Activated CD8-positive, alpha-beta memory T cell treated with anti-CD3 and anti-CD28 coated beads, Interleukin-2, amount 10 ng/mL, durations not matched to agents 7 days and 5 days (primary cell): ENCODE measurements at regions of chr10 and their contacts with region 1.

Region 1: DNA sequence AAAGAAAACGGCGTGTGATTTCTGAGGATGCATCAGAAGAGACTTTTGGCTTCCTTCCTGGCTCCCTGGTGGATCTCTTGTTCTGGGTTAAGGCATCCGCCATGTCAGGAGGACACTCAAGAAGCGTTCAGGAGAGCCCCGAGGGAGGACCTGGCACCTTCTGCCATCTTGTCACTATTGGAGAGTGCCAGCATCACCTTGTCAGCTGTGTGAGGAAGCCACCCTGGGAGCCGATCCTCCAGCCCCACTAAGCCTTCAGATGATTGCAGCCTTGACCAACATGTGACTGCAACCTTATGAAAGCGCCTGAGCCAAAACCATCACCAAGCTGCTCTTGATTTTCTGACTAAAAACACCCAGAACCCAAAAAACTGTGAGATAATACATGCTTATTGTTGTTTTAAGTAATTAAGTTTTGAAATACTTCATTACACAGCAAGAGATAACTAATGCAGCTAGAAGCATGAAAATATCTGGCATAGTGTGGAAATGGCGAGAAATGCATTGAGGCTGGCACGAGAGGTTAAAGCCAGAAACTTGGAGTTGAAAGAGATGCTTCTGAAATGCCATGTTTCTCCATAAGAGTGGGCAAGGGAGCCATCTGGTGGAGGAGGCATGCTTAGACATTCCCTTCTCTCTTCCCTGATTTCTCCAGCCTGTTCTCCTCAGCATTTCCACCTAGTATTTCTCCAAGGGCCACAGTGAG is 5.4 kb upstream of the ZFYVE27 start:
- DNase-seq: peak; percentile 63
- ATAC-seq: peak; percentile 63
- H3K4me3 Mint-ChIP-seq: no peak overlapping the region
- H3K27ac Mint-ChIP-seq: no peak overlapping the region
- H3K4me1 Mint-ChIP-seq: peaks cover 10% of the 10 kb centered on the region
- H3K27me3 Mint-ChIP-seq: peaks cover 5% of the 10 kb centered on the region

Region 2: GRCh38 chr10:97632949-97633884 is 98.3 kb before region 1 on chr10 and contains the start of gene MORN4:
- CTCF ChIA-PET with region 1: no interaction called
- DNase-seq: peak; percentile 93
- ATAC-seq: peak; percentile 99
- H3K4me3 Mint-ChIP-seq: peak within 1 kb of the TSS; percentile 93
- H3K27ac Mint-ChIP-seq: peak within 1 kb of the TSS; percentile 84
- H3K4me1 Mint-ChIP-seq: peaks cover 12% of the 10 kb centered on the region
- H3K27me3 Mint-ChIP-seq: peaks cover 3% of the 10 kb centered on the region
- total RNA-seq, gene MORN4: 1.9 to 2.1 TPM

Region 3: GRCh38 chr10:97676770-97677581 is 54.5 kb before region 1 on chr10:
- CTCF ChIA-PET with region 1: interaction called, 31 read pairs
- DNase-seq: peak; percentile 55
- ATAC-seq: peak; percentile 86
- H3K4me3 Mint-ChIP-seq: no peak overlapping the region
- H3K27ac Mint-ChIP-seq: no peak overlapping the region
- H3K4me1 Mint-ChIP-seq: peaks cover 23% of the 10 kb centered on the region
- H3K27me3 Mint-ChIP-seq: no peaks in the 10 kb centered on the region

Region 4: DNA sequence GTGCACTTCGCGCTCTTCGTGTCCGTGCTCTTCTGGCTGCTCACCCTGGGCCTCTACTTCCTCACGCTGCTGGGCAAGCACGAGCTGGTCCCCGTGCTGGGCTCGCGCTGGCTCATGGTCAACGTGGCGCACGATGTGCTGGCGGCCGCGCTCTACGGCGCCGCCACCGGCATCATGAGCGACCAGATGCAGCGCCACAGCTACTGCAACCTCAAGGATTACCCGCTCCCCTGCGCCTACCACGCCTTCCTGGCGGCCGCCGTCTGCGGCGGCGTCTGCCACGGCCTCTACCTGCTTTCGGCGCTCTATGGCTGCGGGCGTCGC is 17.5 kb before region 1 on chr10:
- CTCF ChIA-PET with region 1: interaction called, 355 read pairs
- DNase-seq: peak; percentile 68
- ATAC-seq: peak; percentile 83
- H3K4me3 Mint-ChIP-seq: peak overlapping the region; percentile 81
- H3K27ac Mint-ChIP-seq: peak overlapping the region; percentile 78
- H3K4me1 Mint-ChIP-seq: peaks cover 11% of the 10 kb centered on the region
- H3K27me3 Mint-ChIP-seq: peaks cover 45% of the 10 kb centered on the region

Region 5: DNA sequence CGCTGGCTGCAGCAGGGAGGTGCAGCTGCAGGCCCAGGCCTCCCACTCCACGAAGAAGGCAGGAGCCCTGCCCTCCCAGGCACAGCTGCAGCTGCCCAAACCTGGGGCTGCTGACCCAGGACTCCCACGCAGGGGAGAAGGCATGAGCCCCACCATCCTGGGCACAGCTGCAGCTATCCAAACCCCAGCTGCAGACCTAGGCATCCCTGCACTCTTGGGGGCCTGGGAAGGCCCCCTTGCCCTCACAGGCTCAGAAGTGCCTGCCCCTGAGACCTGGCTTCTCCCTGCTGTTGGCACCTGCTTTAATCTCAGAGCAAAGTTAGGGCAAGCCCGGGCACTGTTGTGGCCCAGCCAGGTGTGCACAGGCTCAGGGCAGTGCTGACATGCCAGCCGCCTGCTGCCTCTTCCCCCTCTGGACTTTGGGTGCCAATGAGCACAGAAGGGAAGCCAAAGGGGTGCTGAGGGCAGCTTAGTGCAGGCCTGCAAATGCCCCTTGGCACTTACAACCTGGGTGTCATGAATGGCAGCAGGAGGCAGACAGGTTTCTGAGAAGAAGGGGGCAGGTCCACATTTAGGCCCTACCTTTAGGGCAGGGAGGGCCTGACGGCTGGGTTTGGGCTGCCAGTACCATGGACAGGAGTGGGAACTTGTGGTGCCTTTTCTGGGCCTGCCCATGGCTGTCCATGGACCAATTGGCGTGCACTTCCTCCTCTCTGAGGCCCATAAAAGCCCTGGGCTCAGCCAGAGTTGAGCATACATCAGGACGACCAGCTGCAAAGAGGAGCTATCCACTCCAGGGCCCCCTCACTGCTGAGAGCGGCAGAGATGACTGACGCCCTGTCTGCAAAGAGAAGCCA is 267.8 kb after region 1 on chr10:
- CTCF ChIA-PET with region 1: no interaction called
- DNase-seq: no peak
- ATAC-seq: no peak
- H3K4me3 Mint-ChIP-seq: no peak overlapping the region
- H3K27ac Mint-ChIP-seq: no peak overlapping the region
- H3K4me1 Mint-ChIP-seq: no peaks in the 10 kb centered on the region
- H3K27me3 Mint-ChIP-seq: peaks cover 5% of the 10 kb centered on the region